Motor neuron (in vitro differentiated cells): ENCODE measurements at regions of chr2 and their contacts with region 1.

Region 1: GRCh38 chr2:240369801-240370585 is 65.5 kb upstream of the GPC1 start:
- ATAC-seq: peak; percentile 61 to 94 (median 73)
- H3K4me3 ChIP-seq: no peak overlapping the region
- H3K27ac ChIP-seq: no peak overlapping the region
- H3K4me1 ChIP-seq: peaks cover 0 to 6% of the 10 kb centered on the region in 2 donors

Region 2: DNA sequence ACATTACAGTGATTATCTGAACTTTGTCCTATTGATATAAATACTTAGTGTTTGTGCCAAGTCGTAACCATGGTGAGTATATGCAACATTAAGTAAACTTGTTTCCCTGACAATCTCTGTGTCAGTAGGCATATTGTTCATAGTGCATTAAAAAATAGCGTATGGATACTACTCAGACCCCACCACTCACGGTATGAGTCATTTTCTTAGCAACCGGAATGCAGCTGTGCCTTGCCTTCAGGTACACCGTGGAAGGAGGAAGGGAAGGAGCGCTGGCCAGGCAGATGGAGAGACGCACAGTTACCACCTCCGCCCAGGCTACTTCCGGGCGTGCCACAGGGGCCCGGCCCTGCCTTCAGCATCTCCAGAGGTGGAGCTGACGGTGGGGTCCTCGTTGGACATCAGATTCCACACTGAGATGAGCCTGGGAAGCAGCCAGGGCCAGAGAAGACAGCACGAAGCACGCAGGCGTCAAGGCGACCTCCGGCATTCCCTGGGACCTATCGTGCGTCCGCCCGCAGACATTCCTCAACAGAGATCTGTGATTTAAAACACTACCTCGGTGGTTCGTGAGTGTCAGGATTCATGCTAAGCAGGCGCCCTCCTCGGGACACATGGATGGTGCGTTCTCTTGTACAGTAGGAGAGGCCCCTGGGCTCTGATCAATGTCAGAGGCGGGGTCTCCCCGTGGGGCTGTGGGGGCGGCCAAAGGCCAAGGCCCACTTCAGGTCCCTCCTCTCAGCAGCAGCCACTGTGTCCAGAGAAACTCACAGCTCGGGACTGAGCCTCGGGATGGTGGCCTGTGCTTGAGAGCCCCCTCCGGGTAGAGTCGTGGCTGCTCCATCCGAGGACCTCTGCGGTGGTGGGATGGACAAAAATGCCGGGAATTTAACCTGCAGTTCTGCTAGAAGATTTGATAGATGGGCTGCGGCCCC is 886.9 kb before region 1 on chr2:
- in situ Hi-C with region 1: no loop called
- ATAC-seq: peak in 6 of 8 experiments; percentile 24 to 79 (median 61)
- H3K4me3 ChIP-seq: no peak overlapping the region
- H3K27ac ChIP-seq: no peak overlapping the region
- H3K4me1 ChIP-seq: peaks cover 8 to 19% of the 10 kb centered on the region in 2 donors

Region 3: DNA sequence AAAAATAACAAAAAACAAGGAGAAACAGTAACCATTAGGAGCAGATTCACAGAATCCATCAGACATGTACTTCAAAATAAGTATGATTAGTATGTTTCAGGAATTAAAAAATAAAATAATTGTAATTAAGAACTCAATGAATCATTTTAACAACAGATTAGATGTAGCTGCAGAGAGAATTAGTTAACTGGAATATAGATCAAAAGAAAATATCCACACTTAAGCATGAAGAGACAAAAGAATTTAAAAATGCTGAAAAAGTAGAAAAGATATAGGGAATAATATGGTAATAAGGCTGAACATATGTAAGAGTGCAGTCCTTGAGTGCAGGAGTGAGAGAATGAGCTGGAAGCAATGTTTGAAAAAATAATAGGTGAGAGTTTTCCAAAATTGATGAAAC is 292.6 kb before region 1 on chr2:
- in situ Hi-C with region 1: no loop called
- ATAC-seq: no peak
- H3K4me3 ChIP-seq: no peak overlapping the region
- H3K27ac ChIP-seq: no peak overlapping the region
- H3K4me1 ChIP-seq: no peaks in the 10 kb centered on the region

Region 4: GRCh38 chr2:240452457-240453256 is 82.7 kb after region 1 on chr2:
- in situ Hi-C with region 1: loop called in 1 of 9 experiments (anchors 25 kb)
- ATAC-seq: peak; percentile 65 to 87 (median 68)
- H3K4me3 ChIP-seq: peak overlapping the region; percentile 51 to 91 (median 76)
- H3K27ac ChIP-seq: peak overlapping the region; percentile 90 to 93
- H3K4me1 ChIP-seq: peaks cover 51 to 62% of the 10 kb centered on the region in 2 donors